Lower lobe of right lung (tissue), 2 donors: ENCODE measurements at regions of chr1 and their contacts with region 1.

Region 1: GRCh38 chr1:50774759-50775351 is 185.2 kb downstream of the FAF1 start:
- DNase-seq: no peak
- ATAC-seq: peak in 1 of 2 donors; percentile 57
- H3K4me3 ChIP-seq: no peak overlapping the region
- H3K27ac ChIP-seq: no peak overlapping the region
- H3K4me1 ChIP-seq: no peaks in the 10 kb centered on the region
- H3K27me3 ChIP-seq: no peaks in the 10 kb centered on the region
- CTCF ChIP-seq: peak; percentile 81

Region 2: GRCh38 chr1:50720457-50721053 is 54.3 kb before region 1 on chr1:
- intact Hi-C with region 1: no loop called
- DNase-seq: no peak
- ATAC-seq: no peak
- H3K4me3 ChIP-seq: no peak overlapping the region
- H3K27ac ChIP-seq: no peak overlapping the region
- H3K4me1 ChIP-seq: no peaks in the 10 kb centered on the region
- H3K27me3 ChIP-seq: no peaks in the 10 kb centered on the region
- CTCF ChIP-seq: no peak

Region 3: DNA sequence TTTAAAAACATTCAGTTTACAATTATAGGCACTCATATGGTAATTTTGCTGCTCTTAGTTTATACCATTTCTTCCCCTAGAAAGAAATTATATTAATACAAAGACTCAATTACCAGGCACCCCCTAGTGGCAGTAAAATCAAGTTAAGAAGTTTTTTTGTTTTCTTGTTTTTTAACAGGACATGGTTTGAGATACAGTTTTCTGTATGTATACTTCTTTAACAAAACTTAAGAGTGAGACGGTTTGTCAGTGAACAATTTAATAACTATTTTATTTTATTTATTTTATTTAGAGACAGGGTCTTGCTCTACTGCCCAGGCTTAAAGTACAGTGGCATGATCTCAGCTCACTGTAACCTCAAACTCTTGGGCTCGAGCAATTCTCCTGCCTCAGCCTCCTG is 39.4 kb before region 1 on chr1:
- intact Hi-C with region 1: no loop called
- DNase-seq: no peak
- ATAC-seq: no peak
- H3K4me3 ChIP-seq: no peak overlapping the region
- H3K27ac ChIP-seq: no peak overlapping the region
- H3K4me1 ChIP-seq: peaks cover 4% of the 10 kb centered on the region
- H3K27me3 ChIP-seq: no peaks in the 10 kb centered on the region
- CTCF ChIP-seq: peak; percentile 51

Region 4: GRCh38 chr1:51192213-51192843 is 417.5 kb after region 1 on chr1:
- intact Hi-C with region 1: loop called (anchors 5 kb)
- DNase-seq: peak; percentile 68
- ATAC-seq: peak; percentile 78 to 81
- H3K4me3 ChIP-seq: no peak overlapping the region
- H3K27ac ChIP-seq: no peak overlapping the region
- H3K4me1 ChIP-seq: no peaks in the 10 kb centered on the region
- H3K27me3 ChIP-seq: no peaks in the 10 kb centered on the region
- CTCF ChIP-seq: peak; percentile 82